ENCODE measurements at regions of chr6 and their contacts with region 1.

Region 1: GRCh38 chr6:144493035-144493910 is 208.1 kb downstream of the UTRN start:
- DNase-seq: no peak
- H3K4me3 ChIP-seq: no peak overlapping the region
- H3K27ac ChIP-seq: no peak overlapping the region
- H3K4me1 ChIP-seq: no peaks in the 10 kb centered on the region
- H3K27me3 ChIP-seq: no peaks in the 10 kb centered on the region
- CTCF ChIP-seq: no peak
- POLR2A ChIP-seq: no peak

Region 2: DNA sequence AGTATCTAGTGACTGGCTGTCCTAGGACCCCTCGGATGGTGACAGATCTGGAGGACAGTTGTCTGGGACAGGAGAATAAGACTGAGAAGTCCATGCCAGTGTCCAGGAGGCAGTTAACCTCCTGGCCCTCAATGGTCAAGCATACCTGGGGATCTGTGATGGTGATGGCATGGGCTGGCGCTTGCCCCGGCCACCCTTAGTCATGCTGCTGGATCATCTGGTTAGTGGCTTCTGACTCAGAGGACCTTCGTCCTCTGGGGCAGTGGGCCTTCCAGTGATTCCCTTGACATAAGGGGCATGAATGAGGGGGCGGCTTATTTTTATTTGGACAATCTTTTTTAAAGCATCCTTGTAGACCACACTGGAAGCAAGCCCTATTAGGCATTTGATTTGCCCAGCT is 373.9 kb before region 1 on chr6:
- intact Hi-C with region 1: loop called (anchors 10 kb)
- DNase-seq: no peak
- H3K4me3 ChIP-seq: no peak overlapping the region
- H3K27ac ChIP-seq: no peak overlapping the region
- H3K4me1 ChIP-seq: no peaks in the 10 kb centered on the region
- H3K27me3 ChIP-seq: no peaks in the 10 kb centered on the region
- CTCF ChIP-seq: no peak
- POLR2A ChIP-seq: no peak

Region 3: DNA sequence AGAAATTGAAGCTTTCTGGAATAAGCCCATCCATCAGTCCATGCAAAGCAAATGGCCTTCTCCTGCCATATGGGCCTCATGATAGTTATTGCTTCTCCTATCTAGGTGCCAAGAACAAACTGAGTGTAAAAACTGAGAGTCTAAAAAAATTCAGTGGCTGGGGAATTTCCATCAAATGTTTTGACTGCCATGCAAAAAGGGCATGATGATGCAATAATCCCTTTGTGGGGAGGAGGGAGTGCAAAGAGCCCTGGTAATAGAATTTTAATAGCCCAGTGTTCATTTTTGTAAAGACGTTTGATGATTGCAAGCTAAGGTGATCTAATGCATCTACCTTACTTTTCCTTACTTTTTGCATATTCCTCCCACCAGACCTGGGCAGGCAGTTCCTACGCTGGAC is 558.4 kb after region 1 on chr6:
- intact Hi-C with region 1: no loop called
- DNase-seq: no peak
- H3K4me3 ChIP-seq: no peak overlapping the region
- H3K27ac ChIP-seq: no peak overlapping the region
- H3K4me1 ChIP-seq: no peaks in the 10 kb centered on the region
- H3K27me3 ChIP-seq: no peaks in the 10 kb centered on the region
- CTCF ChIP-seq: no peak
- POLR2A ChIP-seq: no peak

Measured in vagina (tissue), 2 donors.